Ovary (tissue), 10 donors: ENCODE measurements at regions of chr14 and their contacts with region 1.

Region 1: GRCh38 chr14:54566410-54567223 is at the start of gene SAMD4A:
- DNase-seq: peak; percentile 67 to 79 (median 75)
- H3K4me3 ChIP-seq: peak within 1 kb of the TSS; percentile 61
- H3K27ac ChIP-seq: peak within 1 kb of the TSS; percentile 96 to 100
- H3K4me1 ChIP-seq: peaks cover 2% of the 10 kb centered on the region
- H3K27me3 ChIP-seq: no peaks in the 10 kb centered on the region
- CTCF ChIP-seq: peak in 2 of 3 donors; percentile 14 to 48
- EP300 ChIP-seq: no peak
- POLR2A ChIP-seq: peak; percentile 64
- total RNA-seq, gene SAMD4A: 4.6 to 22.4 (median 7.3) TPM

Region 2: GRCh38 chr14:54686219-54686870 is 119.7 kb after region 1 on chr14:
- intact Hi-C with region 1: loop called (anchors 1 to 5 kb)
- DNase-seq: peak; percentile 33 to 81 (median 51)
- H3K4me3 ChIP-seq: no peak overlapping the region
- H3K27ac ChIP-seq: peak overlapping the region; percentile 49 to 71
- H3K4me1 ChIP-seq: peaks cover 17% of the 10 kb centered on the region
- H3K27me3 ChIP-seq: no peaks in the 10 kb centered on the region
- CTCF ChIP-seq: no peak
- EP300 ChIP-seq: peak; percentile 30
- POLR2A ChIP-seq: no peak

Region 3: GRCh38 chr14:54691525-54692283 is 125.1 kb after region 1 on chr14:
- intact Hi-C with region 1: loop called (anchors 1 to 5 kb)
- DNase-seq: peak; percentile 70 to 83 (median 80)
- H3K4me3 ChIP-seq: no peak overlapping the region
- H3K27ac ChIP-seq: peak overlapping the region in 1 of 2 donors; percentile 35
- H3K4me1 ChIP-seq: peaks cover 9% of the 10 kb centered on the region
- H3K27me3 ChIP-seq: no peaks in the 10 kb centered on the region
- CTCF ChIP-seq: peak; percentile 69 to 80 (median 75)
- EP300 ChIP-seq: no peak
- POLR2A ChIP-seq: no peak

Region 4: DNA sequence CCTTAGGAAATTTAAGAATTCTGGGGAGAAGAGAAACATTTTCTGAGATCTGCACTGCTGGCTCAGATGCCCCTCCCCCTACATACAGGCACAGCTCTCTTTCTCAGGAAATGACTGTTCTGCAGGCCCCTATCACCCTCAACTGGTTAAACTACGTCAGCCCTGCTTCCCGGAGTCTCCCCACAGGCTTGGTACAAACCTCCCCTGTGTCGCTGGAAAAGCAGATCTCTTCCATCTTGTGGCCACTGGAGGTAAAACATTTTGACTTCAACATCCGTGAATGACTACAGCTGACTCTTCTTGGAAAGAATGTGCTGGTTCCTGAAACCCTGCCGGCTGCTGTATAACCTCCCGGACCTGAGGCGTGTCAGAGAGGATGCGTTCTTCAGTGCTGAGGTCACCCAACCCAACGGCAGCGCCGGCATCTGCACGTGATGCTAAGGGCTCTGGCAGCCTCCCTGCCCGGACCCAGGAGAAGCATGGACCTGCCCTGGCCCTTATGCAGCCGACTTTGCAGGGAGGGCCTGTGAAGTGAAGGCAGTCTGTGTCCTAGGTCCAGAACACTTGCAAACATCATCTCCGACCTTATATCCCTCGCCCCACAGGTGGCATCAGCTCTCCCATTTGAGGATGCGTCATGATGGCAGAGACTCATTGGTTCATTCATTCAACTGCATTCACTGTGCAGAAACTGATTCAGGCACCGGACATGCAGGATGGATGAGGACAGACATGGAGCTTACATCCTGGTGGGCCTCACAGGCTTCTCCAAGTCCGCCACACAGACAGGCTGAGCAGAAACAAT is 206.8 kb after region 1 on chr14:
- intact Hi-C with region 1: loop called (anchors 1 to 5 kb)
- DNase-seq: peak; percentile 80 to 90 (median 86)
- H3K4me3 ChIP-seq: no peak overlapping the region
- H3K27ac ChIP-seq: peak overlapping the region; percentile 67 to 90
- H3K4me1 ChIP-seq: peaks cover 3% of the 10 kb centered on the region
- H3K27me3 ChIP-seq: no peaks in the 10 kb centered on the region
- CTCF ChIP-seq: peak; percentile 63 to 83 (median 81)
- EP300 ChIP-seq: peak; percentile 82
- POLR2A ChIP-seq: no peak

Region 5: DNA sequence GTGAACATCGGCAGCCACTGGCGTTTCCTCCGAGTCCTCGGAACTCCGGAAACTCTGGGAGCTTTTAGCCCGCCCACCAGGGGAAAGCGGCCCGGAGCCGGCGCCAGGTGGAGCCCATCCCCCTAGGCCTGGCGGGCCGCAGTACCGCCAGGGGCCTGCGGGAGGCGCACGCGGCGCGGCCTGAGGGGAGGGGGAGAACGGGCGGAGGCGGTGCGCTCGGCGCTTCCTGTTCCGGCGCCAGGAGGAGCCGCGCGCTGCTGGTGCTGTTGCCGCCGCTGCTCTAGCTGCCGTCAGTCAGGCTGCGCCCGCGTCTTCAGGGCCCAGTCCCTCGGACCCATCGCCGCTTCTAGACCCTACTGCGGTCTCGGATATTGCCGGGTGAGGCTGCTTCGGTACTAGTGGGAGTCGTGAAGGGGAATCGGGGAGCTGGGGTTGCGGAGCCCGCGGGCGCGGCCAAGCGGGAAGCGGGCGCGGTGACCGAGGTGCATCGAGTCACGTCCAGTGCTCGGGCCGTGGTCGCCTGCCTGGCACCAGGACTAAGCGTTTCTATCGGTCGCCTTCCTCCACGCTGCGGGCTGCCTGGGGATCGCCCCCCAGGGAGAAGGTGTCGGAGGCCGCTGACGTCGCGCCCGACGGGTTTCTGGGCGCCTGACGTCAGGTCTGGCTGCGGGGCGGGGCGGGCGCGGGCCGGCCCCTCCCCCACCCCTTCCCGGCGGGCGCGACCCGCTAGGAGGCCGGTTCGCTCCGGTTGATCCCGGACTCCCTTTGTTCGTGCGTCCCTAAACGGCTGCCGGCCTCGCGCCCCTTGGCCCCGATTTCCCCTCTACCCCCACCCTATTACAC is 485.0 kb after region 1 on chr14 and contains the start of gene MAPK1IP1L:
- intact Hi-C with region 1: loop called in 1 of 4 experiments (anchors 5 kb)
- DNase-seq: peak; percentile 90 to 97 (median 94)
- H3K4me3 ChIP-seq: peak within 1 kb of the TSS; percentile 86
- H3K27ac ChIP-seq: peak within 1 kb of the TSS; percentile 97 to 99
- H3K4me1 ChIP-seq: peaks cover 6% of the 10 kb centered on the region
- H3K27me3 ChIP-seq: no peaks in the 10 kb centered on the region
- CTCF ChIP-seq: peak; percentile 100
- EP300 ChIP-seq: peak; percentile 23
- POLR2A ChIP-seq: peak; percentile 100
- total RNA-seq, gene MAPK1IP1L: 35.6 to 130 (median 81.9) TPM